ENCODE measurements at regions of chr6 and their contacts with region 1.

Region 1: GRCh38 chr6:133040094-133040802 is 200.9 kb upstream of the EYA4 start:
- DNase-seq: no peak
- H3K4me3 Mint-ChIP-seq: no peak overlapping the region
- H3K27ac Mint-ChIP-seq: no peak overlapping the region
- H3K4me1 Mint-ChIP-seq: no peaks in the 10 kb centered on the region
- H3K27me3 Mint-ChIP-seq: peaks cover 2% of the 10 kb centered on the region

Region 2: DNA sequence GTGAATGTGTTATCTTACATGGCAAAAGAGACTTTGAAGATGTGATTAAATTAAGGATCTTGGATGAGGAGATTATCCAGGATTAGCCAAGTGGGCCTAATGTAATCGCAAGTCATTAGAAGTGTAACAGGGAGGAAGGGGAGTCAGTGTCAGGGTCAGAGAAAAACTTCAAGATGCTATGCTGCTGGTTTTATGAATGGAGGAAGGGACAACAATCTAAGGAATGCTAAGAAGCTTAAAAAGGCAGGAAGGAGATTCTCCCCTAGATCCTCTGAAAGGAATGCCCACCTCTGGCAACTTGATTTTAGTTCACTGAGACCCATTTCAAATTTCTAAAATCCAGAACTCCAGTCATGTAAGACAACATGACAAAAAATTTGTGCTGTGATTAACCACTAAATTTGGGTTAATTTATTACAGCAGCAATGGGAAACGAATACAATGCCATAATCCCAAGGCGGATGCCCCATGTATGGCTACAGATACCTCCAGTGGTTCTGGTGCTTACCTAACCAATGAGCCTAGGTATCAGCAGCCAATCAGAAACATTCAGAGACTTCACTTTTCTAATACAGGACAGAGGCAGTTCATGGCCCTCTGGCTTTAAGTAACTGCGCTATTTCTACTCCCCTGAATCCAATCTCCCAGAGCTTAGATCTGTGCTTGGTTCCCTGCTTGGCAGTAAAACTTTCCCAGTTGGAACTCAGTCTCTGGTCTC is 491.3 kb before region 1 on chr6:
- CTCF ChIA-PET with region 1: no interaction called
- intact Hi-C with region 1: loop called (anchors 5 kb)
- DNase-seq: no peak
- H3K4me3 Mint-ChIP-seq: no peak overlapping the region
- H3K27ac Mint-ChIP-seq: no peak overlapping the region
- H3K4me1 Mint-ChIP-seq: no peaks in the 10 kb centered on the region
- H3K27me3 Mint-ChIP-seq: peaks cover 12% of the 10 kb centered on the region

Region 3: DNA sequence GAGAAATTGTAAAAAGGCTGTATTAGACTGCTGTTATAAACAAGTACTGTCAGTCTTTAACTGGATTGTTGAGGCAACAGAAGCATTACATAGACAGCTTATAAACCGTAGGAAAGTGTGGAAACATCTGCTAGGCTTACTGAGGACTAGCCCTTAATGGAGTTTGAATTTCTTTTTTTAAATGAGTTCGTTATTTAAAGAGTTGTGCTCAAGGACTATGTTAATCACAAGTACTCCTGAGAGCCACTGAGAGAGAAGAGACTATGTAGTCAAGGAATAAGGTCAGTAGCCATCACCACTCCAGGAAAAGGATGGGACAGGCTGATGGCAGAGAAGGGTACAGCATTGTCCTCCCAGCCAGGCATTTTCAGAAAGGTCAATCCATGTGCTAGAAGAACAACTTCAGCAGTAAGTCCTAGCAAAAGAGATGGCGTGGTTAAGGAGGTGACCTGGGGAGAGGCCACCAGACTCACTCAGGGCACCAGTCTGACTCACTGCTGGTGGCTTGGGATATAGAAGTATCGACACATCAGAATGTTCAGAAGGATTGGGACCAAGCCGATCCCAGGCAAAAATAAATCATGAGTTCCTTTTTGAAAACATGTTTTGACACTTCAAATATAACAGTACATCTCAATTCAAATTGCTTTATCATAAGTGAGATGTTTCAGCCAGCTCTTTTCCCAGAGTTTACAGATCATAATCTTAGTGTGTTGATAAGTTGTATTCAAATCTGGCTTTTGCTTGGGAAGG is 219.4 kb before region 1 on chr6:
- CTCF ChIA-PET with region 1: no interaction called
- intact Hi-C with region 1: loop called (anchors 5 kb)
- DNase-seq: no peak
- H3K4me3 Mint-ChIP-seq: no peak overlapping the region
- H3K27ac Mint-ChIP-seq: peak overlapping the region; percentile 72
- H3K4me1 Mint-ChIP-seq: peaks cover 42% of the 10 kb centered on the region
- H3K27me3 Mint-ChIP-seq: no peaks in the 10 kb centered on the region

Region 4: DNA sequence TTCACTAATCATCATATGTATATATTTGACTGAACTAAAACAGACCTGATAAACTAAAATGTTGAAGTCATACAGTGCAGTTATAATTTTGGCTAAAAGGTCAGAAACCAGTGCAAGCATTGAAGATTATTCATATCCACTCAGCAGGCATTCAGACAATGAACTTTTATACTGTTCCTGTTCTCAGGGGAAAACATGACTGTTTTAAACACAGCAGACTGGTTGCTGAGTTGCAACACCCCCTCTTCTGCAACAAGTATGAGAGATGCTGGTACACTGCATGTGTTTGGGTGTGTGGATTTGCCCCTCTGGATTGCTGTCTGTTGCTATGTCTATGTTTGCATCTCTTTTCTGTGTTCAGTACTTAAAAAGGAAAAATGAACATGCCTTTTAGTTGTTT is 407.7 kb after region 1 on chr6:
- CTCF ChIA-PET with region 1: no interaction called
- intact Hi-C with region 1: no loop called
- DNase-seq: no peak
- H3K4me3 Mint-ChIP-seq: no peak overlapping the region
- H3K27ac Mint-ChIP-seq: no peak overlapping the region
- H3K4me1 Mint-ChIP-seq: no peaks in the 10 kb centered on the region
- H3K27me3 Mint-ChIP-seq: no peaks in the 10 kb centered on the region